Panc1 (cell line): ENCODE measurements at regions of chr10 and their contacts with region 1.

Region 1: DNA sequence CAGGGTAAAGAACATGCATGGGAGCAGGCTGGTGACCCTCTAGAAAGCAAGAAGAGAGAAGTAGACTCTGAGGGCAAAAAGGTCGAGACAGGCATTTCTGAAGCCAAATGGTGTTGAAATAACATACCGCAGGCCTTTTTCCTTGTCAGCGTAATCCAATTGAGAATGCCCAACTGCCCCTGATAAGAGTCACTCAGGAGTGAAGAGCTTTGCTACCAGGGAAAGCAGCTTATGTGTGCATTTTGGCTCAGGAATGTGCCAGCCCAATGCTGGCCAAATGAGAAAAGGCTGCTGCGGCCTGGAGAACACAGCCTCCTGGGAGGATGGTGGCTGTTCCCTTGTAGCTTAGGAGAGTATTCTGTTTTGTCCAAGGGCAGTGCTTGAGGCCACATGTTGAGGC is 61.4 kb upstream of the NFKB2 start:
- DNase-seq: no peak
- ATAC-seq: no peak
- H3K4me3 ChIP-seq: no peak overlapping the region
- H3K27ac ChIP-seq: no peak overlapping the region
- H3K4me1 ChIP-seq: no peaks in the 10 kb centered on the region
- H3K27me3 ChIP-seq: no peaks in the 10 kb centered on the region
- CTCF ChIP-seq: no peak

Region 2: GRCh38 chr10:102280397-102281101 is 53.6 kb before region 1 on chr10:
- CTCF ChIA-PET with region 1: no interaction called
- POLR2A ChIA-PET with region 1: interaction called, 16 read pairs
- in situ Hi-C with region 1: no loop called
- intact Hi-C with region 1: no loop called
- DNase-seq: no peak
- ATAC-seq: peak; percentile 72
- H3K4me3 ChIP-seq: no peak overlapping the region
- H3K27ac ChIP-seq: no peak overlapping the region
- H3K4me1 ChIP-seq: peaks cover 4% of the 10 kb centered on the region; the same call in 1 of the 2 replicates
- H3K27me3 ChIP-seq: no peaks in the 10 kb centered on the region
- CTCF ChIP-seq: no peak

Region 3: DNA sequence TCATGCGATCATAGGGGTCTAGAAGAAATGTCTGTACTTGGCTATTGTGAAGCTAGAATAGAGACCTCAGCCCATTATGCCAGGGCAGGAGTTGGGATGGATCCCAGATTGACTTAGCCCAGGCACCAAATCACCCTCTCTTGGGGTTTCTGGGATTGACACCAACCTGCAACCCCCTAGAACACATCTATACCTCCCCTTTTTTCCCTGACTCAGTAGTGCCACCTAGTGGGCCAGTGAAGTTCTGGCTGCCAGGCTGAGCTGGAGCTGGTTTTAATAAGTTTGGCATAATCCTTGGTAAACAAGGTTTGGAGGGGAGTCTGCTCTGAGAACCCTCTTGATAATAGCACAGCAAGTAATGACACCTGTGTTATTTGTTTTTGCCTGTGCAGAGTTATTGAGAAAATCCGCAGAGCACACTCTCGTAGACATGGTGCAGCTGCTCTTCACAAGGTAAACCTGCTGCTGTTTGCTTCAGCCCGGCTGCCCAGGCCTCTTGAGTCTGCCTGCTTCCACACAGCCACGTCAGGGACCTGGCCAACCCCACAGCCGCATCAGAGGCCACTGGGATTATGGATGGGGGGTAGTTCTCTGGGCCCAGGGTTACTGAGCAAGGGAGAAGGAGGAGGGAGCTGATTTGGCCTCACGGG is 18.1 kb after region 1 on chr10:
- CTCF ChIA-PET with region 1: no interaction called
- POLR2A ChIA-PET with region 1: interaction called, 25 read pairs
- in situ Hi-C with region 1: no loop called
- intact Hi-C with region 1: no loop called
- DNase-seq: peak; percentile 42
- ATAC-seq: peak; percentile 85
- H3K4me3 ChIP-seq: no peak overlapping the region
- H3K27ac ChIP-seq: no peak overlapping the region
- H3K4me1 ChIP-seq: no peaks in the 10 kb centered on the region
- H3K27me3 ChIP-seq: no peaks in the 10 kb centered on the region
- CTCF ChIP-seq: peak; percentile 99